GM12878 (cell line): ENCODE measurements at regions of chr5 and their contacts with region 1.

Region 1: DNA sequence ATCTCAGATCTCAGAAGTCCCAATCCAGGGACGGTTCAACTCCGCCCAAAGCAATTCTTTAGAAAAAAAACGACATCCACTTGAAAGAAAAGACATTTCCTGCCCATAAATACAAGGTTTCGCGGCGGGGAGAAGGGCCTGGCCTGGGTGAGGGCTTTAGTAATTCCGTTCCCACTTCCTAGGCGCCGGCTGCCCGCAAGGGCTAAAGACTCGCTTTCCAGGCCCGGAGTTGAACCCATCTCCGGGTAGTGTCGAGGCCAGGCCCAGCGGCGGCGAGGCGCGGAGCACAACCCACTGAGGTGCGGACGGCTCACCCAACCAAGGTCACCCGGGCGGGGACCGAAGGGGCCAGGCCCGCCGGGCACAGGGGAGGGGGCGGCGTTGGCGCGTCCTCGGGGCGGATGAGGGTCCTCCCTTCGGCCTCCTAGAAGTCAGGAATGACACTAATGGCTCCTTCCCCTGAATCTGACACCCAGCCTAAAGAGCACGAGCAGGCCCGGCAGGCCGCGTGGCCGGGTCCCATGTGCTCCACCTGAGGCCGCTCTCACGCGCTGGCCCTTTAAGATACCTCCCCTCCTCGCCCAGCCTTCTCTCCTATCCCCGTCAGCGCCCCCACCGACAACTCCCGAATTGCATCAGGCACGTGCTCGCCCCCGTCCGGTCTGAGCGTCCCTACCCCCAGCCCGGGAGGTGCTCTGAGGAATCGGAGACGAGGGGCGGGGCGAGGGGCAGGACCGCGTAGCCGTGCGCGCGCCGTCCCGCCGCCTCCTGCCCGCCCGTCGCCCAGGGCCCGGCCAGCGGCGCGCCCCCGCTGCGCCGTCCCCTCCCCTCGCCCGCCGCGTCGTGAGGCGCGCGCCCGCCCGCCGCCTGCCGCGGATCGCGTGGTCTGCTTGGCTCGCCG is 467 bp upstream of the LARP1 start:
- DNase-seq: peak; percentile 93
- ATAC-seq: peak; percentile 89
- H3K4me3 ChIP-seq: peak overlapping the region; percentile 100
- H3K27ac ChIP-seq: peak overlapping the region; percentile 94
- H3K4me1 ChIP-seq: peaks cover 15% of the 10 kb centered on the region
- H3K27me3 ChIP-seq: no peaks in the 10 kb centered on the region
- CTCF ChIP-seq: peak; percentile 45 to 65 (median 49); a peak in 5 of 6 replicates
- EP300 ChIP-seq: peak; percentile 29 to 30; a peak in 1 of 4 replicates
- POLR2A ChIP-seq: peak; percentile 78
- RAD21 ChIP-seq: no peak

Region 2: DNA sequence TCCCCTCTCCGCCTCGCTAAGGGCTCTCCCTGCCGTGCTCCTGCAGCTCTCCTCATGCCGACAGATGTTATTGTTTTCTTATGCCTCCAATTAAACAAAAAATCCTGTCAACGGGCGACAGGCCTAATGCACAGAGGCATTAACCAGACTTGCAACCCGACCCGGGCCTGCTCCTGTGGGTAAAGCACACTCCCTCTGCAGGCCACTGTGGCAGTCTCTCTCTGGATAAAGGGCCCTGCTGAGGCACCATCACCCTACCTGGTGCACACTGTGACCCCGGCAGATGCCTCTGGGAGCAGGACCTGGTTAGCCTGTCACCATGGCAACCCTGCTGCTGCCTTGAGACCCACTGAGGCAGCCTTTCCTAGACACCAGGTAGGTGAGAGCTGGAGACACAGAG is 249.1 kb before region 1 on chr5:
- CTCF ChIA-PET with region 1: no interaction called
- POLR2A ChIA-PET with region 1: no interaction called
- RAD21 ChIA-PET with region 1: no interaction called
- SMC1A ChIA-PET with region 1: no interaction called
- in situ Hi-C with region 1: no loop called
- intact Hi-C with region 1: loop called (anchors 10 kb)
- DNase-seq: no peak
- ATAC-seq: no peak
- H3K4me3 ChIP-seq: no peak overlapping the region
- H3K27ac ChIP-seq: no peak overlapping the region
- H3K4me1 ChIP-seq: peaks cover 41% of the 10 kb centered on the region
- H3K27me3 ChIP-seq: no peaks in the 10 kb centered on the region
- CTCF ChIP-seq: no peak
- EP300 ChIP-seq: no peak
- POLR2A ChIP-seq: no peak
- RAD21 ChIP-seq: no peak

Region 3: GRCh38 chr5:154654486-154655371 is 100.0 kb before region 1 on chr5:
- CTCF ChIA-PET with region 1: interaction called, 6 read pairs
- POLR2A ChIA-PET with region 1: no interaction called
- RAD21 ChIA-PET with region 1: interaction called, 3 read pairs
- SMC1A ChIA-PET with region 1: no interaction called
- in situ Hi-C with region 1: no loop called
- intact Hi-C with region 1: loop called (anchors 5 kb)
- DNase-seq: no peak
- ATAC-seq: no peak
- H3K4me3 ChIP-seq: no peak overlapping the region
- H3K27ac ChIP-seq: no peak overlapping the region; the same call in 1 of the 2 replicates
- H3K4me1 ChIP-seq: peaks cover 10% of the 10 kb centered on the region
- H3K27me3 ChIP-seq: no peaks in the 10 kb centered on the region; a peak in 2 of 4 replicates
- CTCF ChIP-seq: no peak
- EP300 ChIP-seq: no peak
- POLR2A ChIP-seq: no peak
- RAD21 ChIP-seq: no peak

Region 4: GRCh38 chr5:154771383-154771901 is 16.7 kb after region 1 on chr5:
- CTCF ChIA-PET with region 1: interaction called, 8 read pairs
- POLR2A ChIA-PET with region 1: interaction called, 9 read pairs
- RAD21 ChIA-PET with region 1: interaction called, 14 read pairs
- SMC1A ChIA-PET with region 1: interaction called, 33 read pairs
- in situ Hi-C with region 1: no loop called
- intact Hi-C with region 1: no loop called
- DNase-seq: no peak
- ATAC-seq: no peak
- H3K4me3 ChIP-seq: no peak overlapping the region
- H3K27ac ChIP-seq: no peak overlapping the region
- H3K4me1 ChIP-seq: peaks cover 39% of the 10 kb centered on the region
- H3K27me3 ChIP-seq: no peaks in the 10 kb centered on the region
- CTCF ChIP-seq: no peak
- EP300 ChIP-seq: no peak
- POLR2A ChIP-seq: no peak
- RAD21 ChIP-seq: no peak

Region 5: DNA sequence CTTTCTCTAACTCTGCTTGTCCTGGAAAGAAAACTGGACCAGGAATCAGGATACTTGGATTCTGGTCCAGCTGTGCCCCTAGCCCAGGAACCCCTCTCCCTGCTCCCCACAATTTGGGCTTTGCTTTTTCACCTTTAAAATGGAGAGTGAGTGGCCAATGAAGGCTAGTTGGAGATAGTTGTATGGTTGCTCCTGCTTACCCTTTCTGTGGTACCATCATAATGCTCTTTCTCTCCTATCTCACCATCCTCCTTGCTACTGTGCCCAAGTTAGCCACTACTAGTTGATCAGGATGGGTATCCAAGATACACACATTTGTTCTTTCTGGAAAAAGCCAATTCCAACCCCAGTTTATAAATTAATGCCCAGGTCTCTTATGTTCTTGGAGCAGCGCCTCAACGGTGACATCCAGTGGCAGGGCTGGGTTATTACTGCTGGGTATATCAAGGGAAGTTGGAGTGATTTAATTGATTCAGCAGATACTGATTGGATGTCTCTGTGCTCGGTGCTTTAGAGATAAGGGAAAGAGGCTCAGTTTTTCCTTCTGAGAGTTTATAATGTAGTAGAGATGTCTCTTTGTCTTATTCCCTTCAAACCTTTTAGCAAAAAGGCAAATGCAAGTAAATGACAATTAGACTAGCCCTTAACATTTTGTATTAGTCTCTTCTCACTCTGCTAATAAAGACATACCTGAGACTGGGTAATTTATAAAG is 57.1 kb after region 1 on chr5:
- CTCF ChIA-PET with region 1: interaction called, 5 read pairs
- POLR2A ChIA-PET with region 1: interaction called, 3 read pairs
- RAD21 ChIA-PET with region 1: interaction called, 3 read pairs
- SMC1A ChIA-PET with region 1: interaction called, 5 read pairs
- in situ Hi-C with region 1: no loop called
- intact Hi-C with region 1: loop called (anchors 5 kb)
- DNase-seq: peak; percentile 9
- ATAC-seq: peak; percentile 90
- H3K4me3 ChIP-seq: no peak overlapping the region
- H3K27ac ChIP-seq: no peak overlapping the region
- H3K4me1 ChIP-seq: no peaks in the 10 kb centered on the region
- H3K27me3 ChIP-seq: no peaks in the 10 kb centered on the region
- CTCF ChIP-seq: peak; percentile 74 to 88 (median 84)
- EP300 ChIP-seq: no peak
- POLR2A ChIP-seq: no peak
- RAD21 ChIP-seq: peak; percentile 91

Region 6: DNA sequence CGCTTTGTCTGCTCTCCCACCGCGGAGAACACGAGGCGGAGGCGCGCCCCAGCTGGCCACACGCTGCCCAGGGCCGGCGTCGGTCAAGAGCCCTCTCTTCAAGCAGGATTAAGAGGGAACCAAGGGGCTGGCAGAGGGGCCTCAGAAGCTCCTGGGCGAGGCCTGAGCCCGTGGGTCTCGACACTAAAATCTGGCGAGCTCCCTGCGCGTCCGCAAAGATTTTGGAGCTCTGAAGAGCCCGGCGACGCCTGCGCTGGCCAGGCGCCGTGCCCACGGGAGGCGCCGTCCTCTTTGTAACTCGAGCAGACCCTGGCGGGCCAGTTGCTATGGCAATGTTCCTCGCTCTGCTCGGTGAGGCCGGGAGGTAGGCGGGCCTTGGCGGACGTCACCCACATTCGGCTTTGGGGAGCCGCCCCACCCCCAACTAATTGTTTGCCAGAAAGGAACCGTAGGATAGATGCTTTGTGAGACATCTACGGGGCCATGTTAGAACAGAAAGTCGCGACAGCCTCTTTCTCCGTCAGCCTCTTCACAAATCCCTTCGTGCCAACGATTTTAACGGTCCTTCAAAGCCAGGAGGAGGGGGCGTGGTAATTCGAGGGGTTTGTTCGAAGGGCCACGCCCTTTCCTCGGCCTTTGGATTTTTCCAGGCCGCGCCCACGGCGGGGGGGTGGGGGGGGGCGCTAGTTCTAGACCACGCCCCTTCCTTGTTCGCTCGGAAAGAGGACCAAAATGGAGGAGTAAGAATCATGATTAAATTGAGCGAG is 103.0 kb after region 1 on chr5:
- CTCF ChIA-PET with region 1: interaction called, 4 read pairs
- POLR2A ChIA-PET with region 1: interaction called, 7 read pairs
- RAD21 ChIA-PET with region 1: no interaction called
- SMC1A ChIA-PET with region 1: no interaction called
- in situ Hi-C with region 1: loop called (anchors 5 kb)
- intact Hi-C with region 1: loop called (anchors 1 kb)
- DNase-seq: peak; percentile 62
- ATAC-seq: peak; percentile 78
- H3K4me3 ChIP-seq: peak overlapping the region; percentile 80
- H3K27ac ChIP-seq: peak overlapping the region; percentile 91
- H3K4me1 ChIP-seq: peaks cover 11% of the 10 kb centered on the region
- H3K27me3 ChIP-seq: no peaks in the 10 kb centered on the region
- CTCF ChIP-seq: 0 out of 6 replicates have a peak, but pooled peaks of 1 of the 3 experiments have one; percentile 5
- EP300 ChIP-seq: peak in 1 of 2 experiments; percentile 8; a peak in 1 of 4 replicates
- POLR2A ChIP-seq: peak; percentile 67; the same call in 1 of the 2 replicates
- RAD21 ChIP-seq: no peak

Region 7: DNA sequence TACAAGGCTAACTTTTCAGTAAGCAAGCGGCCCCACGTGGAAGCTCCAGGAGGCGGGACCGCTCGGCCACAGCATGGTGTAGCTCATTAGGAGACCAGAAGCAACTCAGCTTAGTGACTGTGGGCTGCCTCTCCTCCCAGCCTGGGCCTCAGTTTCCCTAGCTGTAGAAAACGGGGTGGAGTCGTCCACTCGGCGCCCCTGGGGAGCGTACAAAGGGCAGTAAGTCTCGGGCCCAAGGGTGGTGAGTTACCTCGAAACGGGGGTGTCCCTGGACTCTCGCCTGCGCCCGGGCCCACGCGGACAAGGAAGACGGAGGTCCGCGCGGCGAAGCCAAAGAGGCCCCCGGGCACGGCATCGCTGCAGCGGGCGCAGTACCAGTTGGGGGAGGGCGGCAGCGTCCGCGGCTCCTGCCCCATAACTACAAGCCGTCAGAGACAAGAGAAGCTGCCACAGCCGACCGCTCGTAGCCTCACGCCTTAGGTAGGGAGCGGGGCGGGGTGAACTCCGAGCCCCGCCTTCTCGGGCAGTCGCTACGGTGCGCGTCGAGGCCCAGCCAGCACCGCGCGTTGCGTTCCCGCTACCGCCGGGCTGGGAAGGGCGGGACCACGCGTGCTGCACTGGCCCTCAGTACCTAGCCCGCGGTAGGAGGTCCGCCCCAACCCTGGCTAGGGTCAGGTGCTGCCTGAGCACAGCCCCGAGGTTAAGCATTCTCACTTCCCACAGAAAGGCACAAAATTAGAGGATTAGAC is 183.2 kb after region 1 on chr5 and contains the start of gene GEMIN5:
- CTCF ChIA-PET with region 1: no interaction called
- POLR2A ChIA-PET with region 1: no interaction called
- RAD21 ChIA-PET with region 1: interaction called, 4 read pairs
- SMC1A ChIA-PET with region 1: no interaction called
- in situ Hi-C with region 1: no loop called
- intact Hi-C with region 1: loop called (anchors 2 kb)
- DNase-seq: peak; percentile 54
- ATAC-seq: peak; percentile 92
- H3K4me3 ChIP-seq: peak within 1 kb of the TSS; percentile 87
- H3K27ac ChIP-seq: peak within 1 kb of the TSS; percentile 64
- H3K4me1 ChIP-seq: peaks cover 6% of the 10 kb centered on the region
- H3K27me3 ChIP-seq: no peaks in the 10 kb centered on the region
- CTCF ChIP-seq: no peak
- EP300 ChIP-seq: 0 out of 4 replicates have a peak, but pooled peaks of 1 of the 2 experiments have one; percentile 24
- POLR2A ChIP-seq: peak; percentile 88
- RAD21 ChIP-seq: no peak
- polyA plus RNA-seq, gene GEMIN5: 6.3 to 6.8 TPM